Activated CD8-positive, alpha-beta memory T cell treated with anti-CD3 and anti-CD28 coated beads, Interleukin-2, amount 10 ng/mL, durations not matched to agents 7 days and 5 days (primary cell): ENCODE measurements at regions of chr4 and their contacts with region 1.

Region 1: DNA sequence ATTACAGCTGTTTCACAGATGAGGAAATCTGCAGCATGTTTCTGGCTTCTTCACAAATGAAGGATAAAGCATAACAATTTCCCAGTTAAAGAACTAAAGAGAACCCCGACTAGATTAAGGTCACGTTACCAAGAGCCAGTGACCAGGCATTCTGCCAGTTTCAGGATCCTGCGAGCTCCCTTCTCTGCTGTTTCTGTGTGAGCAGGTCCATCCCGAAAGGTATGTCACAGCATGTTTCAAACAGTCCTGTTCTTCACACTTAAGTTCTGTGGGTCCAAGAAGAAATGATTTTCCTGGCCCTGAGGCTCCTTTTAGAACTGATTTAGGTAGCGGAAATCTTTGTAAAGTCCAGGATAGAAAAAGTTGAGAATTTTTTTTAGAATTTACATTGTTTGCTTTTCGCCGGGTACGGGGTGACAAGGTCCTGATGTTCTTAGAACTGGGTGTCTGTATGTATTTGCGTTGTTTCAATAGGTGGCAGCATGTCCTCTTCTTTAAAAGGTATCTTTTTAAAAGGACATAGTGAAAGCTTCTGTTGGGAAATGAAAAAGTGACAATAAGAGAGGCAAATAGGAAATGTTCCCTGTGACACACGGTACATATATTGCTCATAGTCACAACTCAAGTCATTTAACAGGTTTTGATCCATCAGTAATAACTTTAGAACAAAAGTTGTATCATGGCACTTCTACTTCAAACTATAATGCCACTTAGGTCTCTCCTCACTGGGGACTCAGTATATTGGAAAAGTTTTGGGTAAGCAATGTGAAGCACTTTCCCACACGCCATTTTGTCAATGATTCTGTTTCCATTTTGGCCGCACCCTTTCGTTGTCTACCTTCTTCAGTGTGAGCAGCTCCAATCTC is 18.4 kb downstream of the IL21 start:
- DNase-seq: no peak
- ATAC-seq: peak; percentile 72
- H3K4me3 Mint-ChIP-seq: no peak overlapping the region
- H3K27ac Mint-ChIP-seq: no peak overlapping the region
- H3K4me1 Mint-ChIP-seq: peaks cover 9% of the 10 kb centered on the region
- H3K27me3 Mint-ChIP-seq: peaks cover 36% of the 10 kb centered on the region

Region 2: GRCh38 chr4:122170775-122171174 is 431.7 kb before region 1 on chr4:
- CTCF ChIA-PET with region 1: no interaction called
- DNase-seq: no peak
- ATAC-seq: no peak
- H3K4me3 Mint-ChIP-seq: no peak overlapping the region
- H3K27ac Mint-ChIP-seq: no peak overlapping the region
- H3K4me1 Mint-ChIP-seq: no peaks in the 10 kb centered on the region
- H3K27me3 Mint-ChIP-seq: no peaks in the 10 kb centered on the region

Region 3: DNA sequence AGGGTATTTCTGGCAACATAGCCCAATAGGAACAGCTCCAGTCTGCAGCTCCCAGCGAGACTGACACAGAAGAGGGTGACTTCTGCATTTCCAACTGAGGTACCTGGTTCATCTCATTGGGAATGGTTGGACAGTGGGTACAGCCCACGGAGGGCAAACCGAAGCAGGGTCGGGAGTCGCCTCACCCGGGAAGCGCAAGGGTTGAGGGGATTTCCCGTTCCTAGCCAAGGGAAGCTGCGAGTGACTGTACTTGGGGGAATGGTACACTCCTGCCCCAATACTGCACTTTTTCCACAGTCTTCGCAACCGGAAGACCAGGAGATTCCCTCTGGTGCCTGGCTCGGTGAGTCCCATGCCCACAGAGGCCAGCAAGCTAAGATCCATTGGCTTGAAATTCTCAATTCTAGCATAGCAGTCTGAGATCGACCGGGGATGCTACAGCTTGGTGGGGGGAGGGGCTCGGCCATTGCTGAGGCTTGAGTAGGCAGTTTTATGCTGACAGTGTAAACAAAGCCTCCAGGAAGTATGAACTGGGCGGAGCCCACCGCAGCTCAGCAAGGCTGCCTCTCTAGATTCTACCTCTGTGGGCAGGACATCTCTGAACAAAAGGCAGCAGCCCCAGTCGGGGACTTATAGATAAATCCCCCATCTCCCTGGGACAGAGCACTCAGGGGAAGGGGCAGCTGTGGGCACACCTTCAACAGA is 237.7 kb before region 1 on chr4:
- CTCF ChIA-PET with region 1: no interaction called
- DNase-seq: peak; percentile 48
- ATAC-seq: no peak
- H3K4me3 Mint-ChIP-seq: no peak overlapping the region
- H3K27ac Mint-ChIP-seq: no peak overlapping the region
- H3K4me1 Mint-ChIP-seq: peaks cover 3% of the 10 kb centered on the region
- H3K27me3 Mint-ChIP-seq: no peaks in the 10 kb centered on the region

Region 4: GRCh38 chr4:122450847-122451246 is 151.7 kb before region 1 on chr4:
- CTCF ChIA-PET with region 1: no interaction called
- DNase-seq: peak; percentile 45
- ATAC-seq: peak; percentile 47
- H3K4me3 Mint-ChIP-seq: no peak overlapping the region
- H3K27ac Mint-ChIP-seq: no peak overlapping the region
- H3K4me1 Mint-ChIP-seq: peaks cover 16% of the 10 kb centered on the region
- H3K27me3 Mint-ChIP-seq: no peaks in the 10 kb centered on the region

Region 5: DNA sequence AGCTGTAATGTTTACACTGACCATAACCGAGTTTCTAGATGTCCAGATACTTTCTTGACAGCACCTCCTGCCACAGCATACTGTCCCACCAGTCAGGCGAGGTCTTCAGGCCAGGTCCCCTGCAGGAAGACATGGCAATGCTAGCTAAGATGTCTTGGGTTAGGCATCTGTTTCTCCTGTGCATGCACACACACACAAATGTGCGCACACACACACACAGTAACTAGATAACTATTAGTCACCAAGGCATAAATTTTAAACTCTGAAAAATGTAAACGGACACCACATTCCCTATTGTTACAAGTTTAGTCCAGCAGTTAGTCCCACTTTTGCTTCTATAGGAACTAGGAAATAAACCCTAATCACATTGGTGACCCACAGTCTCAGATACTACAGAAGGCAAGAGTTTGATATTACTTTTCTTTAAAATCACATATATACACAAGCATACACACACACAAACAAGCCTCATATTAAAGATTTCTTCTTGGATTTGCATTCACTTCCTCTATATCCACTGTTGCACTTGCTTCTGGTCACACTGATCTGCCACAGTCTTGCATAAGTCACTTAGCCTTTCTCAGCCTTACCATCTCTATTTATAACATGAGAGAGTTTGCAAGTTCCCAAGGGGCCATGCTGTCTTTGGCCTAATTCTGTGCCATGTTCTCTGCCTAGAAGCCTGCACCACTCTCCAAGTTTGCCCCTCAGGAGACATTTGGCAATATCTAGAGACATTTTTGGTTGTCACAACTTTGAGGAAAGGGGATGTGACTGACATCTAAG is 13.9 kb before region 1 on chr4:
- CTCF ChIA-PET with region 1: interaction called, 11 read pairs
- DNase-seq: no peak
- ATAC-seq: no peak
- H3K4me3 Mint-ChIP-seq: no peak overlapping the region
- H3K27ac Mint-ChIP-seq: no peak overlapping the region
- H3K4me1 Mint-ChIP-seq: peaks cover 21% of the 10 kb centered on the region
- H3K27me3 Mint-ChIP-seq: peaks cover 6% of the 10 kb centered on the region

Region 6: GRCh38 chr4:122716825-122717448 is 114.4 kb after region 1 on chr4:
- CTCF ChIA-PET with region 1: interaction called, 14 read pairs
- DNase-seq: peak; percentile 82
- ATAC-seq: peak; percentile 92
- H3K4me3 Mint-ChIP-seq: no peak overlapping the region
- H3K27ac Mint-ChIP-seq: no peak overlapping the region
- H3K4me1 Mint-ChIP-seq: peaks cover 21% of the 10 kb centered on the region
- H3K27me3 Mint-ChIP-seq: peaks cover 6% of the 10 kb centered on the region